Activated CD8-positive, alpha-beta T cell treated with anti-CD3 and anti-CD28 coated beads for 36 hours (primary cell): ENCODE measurements at regions of chr3 and their contacts with region 1.

Region 1: GRCh38 chr3:129934234-129935123 is 40.0 kb upstream of the TRH start:
- DNase-seq: peak; percentile 48
- ATAC-seq: peak; percentile 61
- H3K4me3 Mint-ChIP-seq: no peak overlapping the region
- H3K27ac Mint-ChIP-seq: no peak overlapping the region
- H3K4me1 Mint-ChIP-seq: peaks cover 2% of the 10 kb centered on the region
- H3K27me3 Mint-ChIP-seq: no peaks in the 10 kb centered on the region
- CTCF ChIP-seq: peak; percentile 94

Region 2: GRCh38 chr3:129650256-129650872 is 284.1 kb before region 1 on chr3:
- CTCF ChIA-PET with region 1: interaction called, 8 read pairs
- POLR2A ChIA-PET with region 1: no interaction called
- intact Hi-C with region 1: loop called (anchors 1 kb)
- DNase-seq: peak; percentile 80
- ATAC-seq: peak; percentile 67
- H3K4me3 Mint-ChIP-seq: no peak overlapping the region
- H3K27ac Mint-ChIP-seq: no peak overlapping the region
- H3K4me1 Mint-ChIP-seq: peaks cover 4% of the 10 kb centered on the region
- H3K27me3 Mint-ChIP-seq: no peaks in the 10 kb centered on the region
- CTCF ChIP-seq: peak; percentile 71

Region 3: DNA sequence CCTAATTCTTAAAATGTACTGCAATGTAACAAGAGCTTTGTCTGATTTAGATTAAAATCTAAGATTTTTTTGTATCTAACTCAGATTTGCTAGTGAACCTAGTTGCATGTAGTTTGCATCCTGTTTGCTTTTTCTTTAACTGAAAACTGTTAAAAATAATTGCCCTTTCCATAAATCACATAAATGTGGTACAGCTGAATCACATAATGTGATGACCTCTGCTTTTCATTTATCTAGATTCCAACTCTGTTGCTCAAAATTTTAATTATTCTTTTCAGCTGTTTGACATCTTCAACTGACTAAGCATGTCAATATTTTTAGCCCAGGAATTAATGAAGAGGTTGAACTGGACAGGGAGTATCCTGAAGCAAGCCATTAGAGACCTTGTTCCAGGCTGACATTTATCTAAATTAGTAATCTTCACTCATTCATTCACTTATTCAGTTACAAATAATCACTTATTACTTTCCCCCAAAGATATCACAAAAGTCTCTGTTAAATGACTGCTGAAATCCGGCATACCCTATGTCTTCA is 226.1 kb before region 1 on chr3:
- CTCF ChIA-PET with region 1: no interaction called
- POLR2A ChIA-PET with region 1: no interaction called
- intact Hi-C with region 1: no loop called
- DNase-seq: no peak
- ATAC-seq: no peak
- H3K4me3 Mint-ChIP-seq: no peak overlapping the region
- H3K27ac Mint-ChIP-seq: no peak overlapping the region
- H3K4me1 Mint-ChIP-seq: peaks cover 6% of the 10 kb centered on the region
- H3K27me3 Mint-ChIP-seq: no peaks in the 10 kb centered on the region
- CTCF ChIP-seq: no peak

Region 4: DNA sequence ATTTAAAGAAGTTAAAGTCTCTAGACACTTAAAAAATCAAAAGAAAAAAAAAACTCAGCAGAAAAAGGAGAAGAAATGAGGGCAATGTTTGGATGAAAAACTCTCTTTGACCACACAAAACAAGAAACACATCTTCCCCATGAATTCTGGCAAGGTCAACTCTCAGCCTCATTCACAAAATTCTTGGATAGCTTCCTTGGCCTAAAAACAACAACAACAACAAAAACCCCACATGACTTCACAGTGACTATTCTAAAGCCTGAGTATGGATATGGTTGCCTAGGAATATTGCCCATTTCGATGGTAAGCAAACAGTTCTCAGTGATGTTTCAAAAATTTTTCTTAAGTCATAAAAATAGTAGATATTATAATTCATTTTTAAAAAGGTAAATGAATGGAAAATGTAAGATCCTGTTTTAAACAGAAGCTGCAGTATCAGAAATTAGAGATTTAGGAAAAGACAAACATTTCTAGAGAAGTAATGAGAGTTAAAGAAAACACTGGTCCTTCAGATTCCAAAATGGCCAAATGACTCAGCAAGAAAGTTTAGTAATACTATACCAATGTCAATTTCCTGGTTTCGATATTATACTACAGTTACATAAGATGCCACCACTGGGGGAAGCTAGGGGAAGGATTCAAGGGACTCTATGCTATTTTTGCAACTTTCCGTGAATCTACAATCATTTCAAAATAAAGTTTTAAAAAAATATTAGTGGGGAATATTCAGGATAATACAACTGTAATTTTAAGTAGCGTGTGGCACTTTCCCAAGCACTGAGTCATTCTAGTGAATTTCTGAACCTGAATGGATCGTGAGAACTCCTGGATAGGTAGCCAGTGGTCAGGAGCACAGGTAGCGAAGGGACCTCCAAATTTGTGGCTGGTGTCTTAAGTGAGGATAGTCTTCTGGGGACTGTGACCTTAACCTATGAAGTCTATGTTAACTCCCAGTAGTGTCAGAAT is 78.7 kb before region 1 on chr3:
- CTCF ChIA-PET with region 1: no interaction called
- POLR2A ChIA-PET with region 1: no interaction called
- intact Hi-C with region 1: no loop called
- DNase-seq: no peak
- ATAC-seq: no peak
- H3K4me3 Mint-ChIP-seq: no peak overlapping the region
- H3K27ac Mint-ChIP-seq: no peak overlapping the region
- H3K4me1 Mint-ChIP-seq: peaks cover 25% of the 10 kb centered on the region
- H3K27me3 Mint-ChIP-seq: no peaks in the 10 kb centered on the region
- CTCF ChIP-seq: no peak

Region 5: GRCh38 chr3:130044370-130044769 is 109.9 kb after region 1 on chr3:
- CTCF ChIA-PET with region 1: no interaction called
- POLR2A ChIA-PET with region 1: no interaction called
- intact Hi-C with region 1: no loop called
- DNase-seq: no peak
- ATAC-seq: no peak
- H3K4me3 Mint-ChIP-seq: no peak overlapping the region
- H3K27ac Mint-ChIP-seq: no peak overlapping the region
- H3K4me1 Mint-ChIP-seq: no peaks in the 10 kb centered on the region
- H3K27me3 Mint-ChIP-seq: no peaks in the 10 kb centered on the region
- CTCF ChIP-seq: no peak